ENCODE measurements at regions of chr11 and their contacts with region 1.

Region 1: GRCh38 chr11:75706260-75706729 is 11.3 kb upstream of the MOGAT2 start:
- DNase-seq: peak; percentile 32 to 77 (median 66)
- ATAC-seq: peak; percentile 78
- H3K4me3 ChIP-seq: no peak overlapping the region
- H3K4me3 Mint-ChIP-seq: no peak overlapping the region
- H3K27ac ChIP-seq: no peak overlapping the region
- H3K27ac Mint-ChIP-seq: no peak overlapping the region
- H3K4me1 ChIP-seq: peaks cover 6% of the 10 kb centered on the region
- H3K4me1 Mint-ChIP-seq: peaks cover 11% of the 10 kb centered on the region
- H3K27me3 ChIP-seq: no peaks in the 10 kb centered on the region
- H3K27me3 Mint-ChIP-seq: peaks cover 6% of the 10 kb centered on the region
- CTCF ChIP-seq: peak; percentile 90

Region 2: GRCh38 chr11:75547580-75548058 is 158.7 kb before region 1 on chr11:
- CTCF ChIA-PET with region 1: no interaction called
- POLR2A ChIA-PET with region 1: no interaction called
- intact Hi-C with region 1: loop called in 1 of 2 experiments (anchors 1 kb)
- DNase-seq: peak in 5 of 9 experiments; percentile 28 to 63 (median 56)
- ATAC-seq: peak; percentile 54
- H3K4me3 ChIP-seq: no peak overlapping the region
- H3K4me3 Mint-ChIP-seq: no peak overlapping the region
- H3K27ac ChIP-seq: no peak overlapping the region
- H3K27ac Mint-ChIP-seq: no peak overlapping the region
- H3K4me1 ChIP-seq: no peaks in the 10 kb centered on the region
- H3K4me1 Mint-ChIP-seq: peaks cover 2% of the 10 kb centered on the region
- H3K27me3 ChIP-seq: peaks cover 0 to 3% of the 10 kb centered on the region in 2 experiments
- H3K27me3 Mint-ChIP-seq: peaks cover 4% of the 10 kb centered on the region
- CTCF ChIP-seq: peak; percentile 80

Region 3: GRCh38 chr11:75673977-75674582 is 32.2 kb before region 1 on chr11:
- CTCF ChIA-PET with region 1: interaction called, 15 read pairs
- POLR2A ChIA-PET with region 1: no interaction called
- intact Hi-C with region 1: no loop called
- DNase-seq: peak in 2 of 9 experiments; percentile 7 to 9
- ATAC-seq: no peak
- H3K4me3 ChIP-seq: no peak overlapping the region
- H3K4me3 Mint-ChIP-seq: no peak overlapping the region
- H3K27ac ChIP-seq: no peak overlapping the region
- H3K27ac Mint-ChIP-seq: no peak overlapping the region
- H3K4me1 ChIP-seq: peaks cover under 1% of the 10 kb centered on the region
- H3K4me1 Mint-ChIP-seq: no peaks in the 10 kb centered on the region
- H3K27me3 ChIP-seq: peaks cover 2 to 8% of the 10 kb centered on the region in 2 experiments
- H3K27me3 Mint-ChIP-seq: peaks cover 46% of the 10 kb centered on the region
- CTCF ChIP-seq: no peak

Region 4: DNA sequence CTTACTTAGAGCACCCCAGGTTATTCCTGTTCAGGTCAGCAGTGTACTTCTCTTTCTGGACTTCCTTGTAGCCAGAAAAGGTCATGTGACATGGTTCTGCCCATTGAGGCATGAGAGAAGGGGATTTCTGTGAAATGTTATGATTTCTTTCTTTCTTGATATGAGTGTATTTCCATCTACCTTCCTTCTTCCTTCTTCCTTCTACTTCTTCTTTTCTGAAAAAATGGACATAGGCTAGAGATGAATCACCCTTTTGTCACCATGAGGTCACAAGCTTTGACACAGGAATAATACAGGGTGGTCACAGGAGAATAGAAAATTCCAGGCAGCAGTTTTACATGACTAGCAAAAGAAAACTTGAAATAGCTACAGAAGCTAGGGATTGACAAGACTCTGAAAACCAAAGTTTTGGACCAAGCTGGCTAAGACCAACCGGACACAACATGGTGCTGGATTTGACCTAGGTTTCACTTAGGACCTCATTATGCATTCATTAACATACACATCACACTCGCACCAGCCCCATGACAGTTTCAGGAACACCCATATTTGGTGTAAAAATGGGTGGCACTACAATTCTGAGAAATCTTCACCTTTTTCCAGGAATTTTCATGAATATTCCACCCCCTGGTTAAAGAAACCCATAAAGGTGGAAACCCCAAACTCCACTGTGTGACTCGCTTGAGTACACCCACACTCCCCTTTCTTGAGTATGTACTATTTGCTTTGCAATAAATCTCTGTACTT is 16.3 kb before region 1 on chr11:
- CTCF ChIA-PET with region 1: interaction called, 17 read pairs
- POLR2A ChIA-PET with region 1: no interaction called
- intact Hi-C with region 1: no loop called
- DNase-seq: peak in 1 of 9 experiments; percentile 35
- ATAC-seq: no peak
- H3K4me3 ChIP-seq: no peak overlapping the region
- H3K4me3 Mint-ChIP-seq: no peak overlapping the region
- H3K27ac ChIP-seq: no peak overlapping the region
- H3K27ac Mint-ChIP-seq: no peak overlapping the region
- H3K4me1 ChIP-seq: no peaks in the 10 kb centered on the region
- H3K4me1 Mint-ChIP-seq: no peaks in the 10 kb centered on the region
- H3K27me3 ChIP-seq: no peaks in the 10 kb centered on the region
- H3K27me3 Mint-ChIP-seq: peaks cover 52% of the 10 kb centered on the region
- CTCF ChIP-seq: no peak

Region 5: DNA sequence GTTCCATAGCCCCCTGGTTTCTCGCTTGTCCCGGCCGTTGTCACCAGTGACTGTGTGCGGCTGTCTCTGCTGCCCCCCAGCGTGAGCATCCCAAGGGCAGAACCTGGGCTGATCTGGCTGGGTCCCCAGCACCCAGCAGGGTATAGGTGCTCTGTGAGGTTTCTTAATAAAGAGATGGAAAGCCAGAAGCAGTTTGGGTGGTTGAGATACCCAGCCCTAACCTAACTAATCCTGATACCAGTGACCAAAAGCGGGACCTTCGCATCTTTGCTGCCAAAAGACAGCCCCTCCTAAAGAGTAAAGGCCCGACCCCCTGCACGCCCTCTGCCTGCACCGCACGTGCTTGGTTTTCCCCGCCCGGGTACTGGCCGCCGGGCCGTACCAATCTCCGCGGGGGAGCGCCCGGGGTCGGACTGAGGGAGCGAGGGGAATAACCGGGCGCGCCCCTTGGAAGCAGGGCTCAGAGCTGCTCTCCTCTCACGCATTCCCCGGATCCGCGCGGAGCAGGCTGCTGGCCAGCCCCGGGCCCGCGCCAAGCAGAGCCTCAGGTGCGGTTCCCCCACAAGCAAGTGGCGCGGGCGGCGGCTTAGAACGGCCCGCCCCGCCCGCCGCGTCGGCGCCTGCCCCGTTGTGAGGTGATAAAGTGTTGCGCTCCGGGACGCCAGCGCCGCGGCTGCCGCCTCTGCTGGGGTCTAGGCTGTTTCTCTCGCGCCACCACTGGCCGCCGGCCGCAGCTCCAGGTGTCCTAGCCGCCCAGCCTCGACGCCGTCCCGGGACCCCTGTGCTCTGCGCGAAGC is 62.0 kb after region 1 on chr11 and contains the start of gene DGAT2:
- CTCF ChIA-PET with region 1: interaction called, 5 read pairs
- POLR2A ChIA-PET with region 1: no interaction called
- intact Hi-C with region 1: loop called in 1 of 2 experiments (anchors 2 kb)
- DNase-seq: peak; percentile 50 to 83 (median 67)
- ATAC-seq: peak; percentile 91
- H3K4me3 ChIP-seq: peak within 1 kb of the TSS; percentile 54 to 71
- H3K4me3 Mint-ChIP-seq: peak within 1 kb of the TSS; percentile 80
- H3K27ac ChIP-seq: no peak within 1 kb of the TSS
- H3K27ac Mint-ChIP-seq: peak within 1 kb of the TSS; percentile 49
- H3K4me1 ChIP-seq: peaks cover 18% of the 10 kb centered on the region
- H3K4me1 Mint-ChIP-seq: peaks cover 17% of the 10 kb centered on the region
- H3K27me3 ChIP-seq: peaks cover 4 to 8% of the 10 kb centered on the region in 2 experiments
- H3K27me3 Mint-ChIP-seq: peaks cover 16% of the 10 kb centered on the region
- CTCF ChIP-seq: no peak
- total RNA-seq, gene DGAT2: not detected